Activated T-helper 1 cell treated with anti-CD3 and anti-CD28 coated beads, Interleukin-12 subunit alpha, Interleukin-12 subunit beta, Interleukin-2, Interleukin-4 antibody, amounts not matched to agents 30 ng/mL and 10 ng/mL and 1 ng/mL, durations not matched to agents 14 hours and 24 hours and 36 hours (primary cell): ENCODE measurements at regions of chr15 and their contacts with region 1.

Region 1: DNA sequence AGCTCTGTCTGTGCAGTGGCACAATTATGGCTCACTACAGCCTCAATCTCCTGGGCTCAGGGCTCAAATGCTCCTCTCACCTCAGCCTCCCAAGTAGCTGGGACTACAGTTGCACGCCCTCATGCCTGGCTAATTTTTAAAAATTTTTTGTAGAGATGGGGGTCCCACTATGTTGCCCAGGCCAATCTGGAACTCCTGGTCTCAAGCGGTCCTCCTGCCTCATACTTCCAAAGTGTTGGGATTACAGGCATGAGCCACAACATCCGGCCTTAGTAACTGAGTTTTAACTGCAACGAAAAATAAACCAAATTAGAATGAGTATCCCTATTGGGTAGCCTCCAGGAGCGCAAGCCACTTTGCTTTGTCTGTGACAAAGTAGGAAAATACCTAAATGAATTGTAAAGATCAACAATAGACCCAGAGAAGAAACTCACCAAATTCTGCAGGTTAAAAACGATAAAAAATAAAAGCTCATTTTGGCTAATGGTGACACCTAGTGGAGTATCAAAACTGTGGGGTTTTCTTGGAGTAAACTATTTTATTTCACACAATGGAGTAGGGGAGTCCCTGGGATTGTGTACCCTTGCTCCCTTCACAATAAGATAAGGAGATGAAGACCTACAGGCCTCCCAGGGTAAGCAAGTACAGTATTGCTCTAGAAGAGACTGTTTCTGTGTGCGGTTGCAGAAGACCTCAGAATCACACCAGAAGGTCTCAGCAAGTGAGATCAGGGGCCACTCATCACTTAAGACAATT is 21.0 kb upstream of the CA12 start:
- DNase-seq: no peak
- H3K4me3 Mint-ChIP-seq: no peak overlapping the region
- H3K27ac Mint-ChIP-seq: no peak overlapping the region
- H3K4me1 Mint-ChIP-seq: peaks cover 24% of the 10 kb centered on the region
- H3K27me3 Mint-ChIP-seq: no peaks in the 10 kb centered on the region

Region 2: GRCh38 chr15:63048115-63048775 is 354.4 kb before region 1 on chr15:
- intact Hi-C with region 1: loop called (anchors 2 kb)
- DNase-seq: peak; percentile 79
- H3K4me3 Mint-ChIP-seq: peak overlapping the region; percentile 92
- H3K27ac Mint-ChIP-seq: no peak overlapping the region
- H3K4me1 Mint-ChIP-seq: peaks cover 20% of the 10 kb centered on the region
- H3K27me3 Mint-ChIP-seq: peaks cover 55% of the 10 kb centered on the region

Region 3: DNA sequence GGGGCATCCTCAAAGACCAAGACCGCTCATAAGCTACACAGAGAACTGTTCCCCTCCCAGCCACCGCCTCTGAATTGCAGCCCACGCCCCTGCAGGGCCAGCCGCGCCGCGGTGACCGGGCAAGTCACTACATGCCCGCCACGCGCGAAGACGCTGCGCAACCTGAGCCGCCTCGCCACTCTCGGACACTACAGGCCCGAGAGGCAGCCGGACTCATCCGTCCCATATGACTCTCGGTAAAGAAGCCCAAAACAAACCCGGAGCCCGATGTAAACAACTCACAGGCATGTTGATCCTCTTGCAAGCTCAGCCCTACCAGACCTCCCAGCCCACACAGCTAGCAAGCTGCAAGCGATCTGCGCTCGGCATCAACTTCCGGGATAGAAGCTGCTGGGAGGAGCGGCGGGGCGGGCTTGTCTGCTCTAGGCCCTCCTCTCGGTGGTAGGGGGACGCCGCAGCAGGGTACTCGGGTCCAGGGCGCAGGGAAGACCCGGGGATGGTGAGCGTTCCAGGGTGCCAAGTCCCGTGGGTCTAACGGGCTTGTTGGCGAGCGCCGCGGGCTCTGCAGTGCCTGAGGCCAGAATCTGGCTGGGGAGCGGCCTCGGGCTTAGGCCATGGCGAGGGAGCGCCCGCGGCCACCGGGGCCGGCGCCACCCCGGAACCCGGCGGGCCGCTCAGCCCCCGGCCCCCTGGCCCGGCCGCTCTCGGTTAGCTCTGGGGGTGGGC is 245.4 kb before region 1 on chr15 and contains the start of gene RPS27L:
- intact Hi-C with region 1: loop called (anchors 10 kb)
- DNase-seq: peak; percentile 86
- H3K4me3 Mint-ChIP-seq: peak within 1 kb of the TSS; percentile 98
- H3K27ac Mint-ChIP-seq: peak within 1 kb of the TSS; percentile 98
- H3K4me1 Mint-ChIP-seq: peaks cover 21% of the 10 kb centered on the region
- H3K27me3 Mint-ChIP-seq: no peaks in the 10 kb centered on the region
- total RNA-seq, gene RPS27L: 163 and 164 TPM in 2 replicates

Region 4: GRCh38 chr15:63212050-63213004 is 190.3 kb before region 1 on chr15:
- intact Hi-C with region 1: no loop called
- DNase-seq: no peak
- H3K4me3 Mint-ChIP-seq: peak overlapping the region; percentile 79
- H3K27ac Mint-ChIP-seq: peak overlapping the region; percentile 98
- H3K4me1 Mint-ChIP-seq: peaks cover 68% of the 10 kb centered on the region
- H3K27me3 Mint-ChIP-seq: no peaks in the 10 kb centered on the region

Region 5: GRCh38 chr15:63288778-63289378 is 113.8 kb before region 1 on chr15:
- intact Hi-C with region 1: loop called (anchors 1 kb)
- DNase-seq: no peak
- H3K4me3 Mint-ChIP-seq: no peak overlapping the region
- H3K27ac Mint-ChIP-seq: no peak overlapping the region
- H3K4me1 Mint-ChIP-seq: peaks cover 8% of the 10 kb centered on the region
- H3K27me3 Mint-ChIP-seq: peaks cover 3% of the 10 kb centered on the region

Region 6: DNA sequence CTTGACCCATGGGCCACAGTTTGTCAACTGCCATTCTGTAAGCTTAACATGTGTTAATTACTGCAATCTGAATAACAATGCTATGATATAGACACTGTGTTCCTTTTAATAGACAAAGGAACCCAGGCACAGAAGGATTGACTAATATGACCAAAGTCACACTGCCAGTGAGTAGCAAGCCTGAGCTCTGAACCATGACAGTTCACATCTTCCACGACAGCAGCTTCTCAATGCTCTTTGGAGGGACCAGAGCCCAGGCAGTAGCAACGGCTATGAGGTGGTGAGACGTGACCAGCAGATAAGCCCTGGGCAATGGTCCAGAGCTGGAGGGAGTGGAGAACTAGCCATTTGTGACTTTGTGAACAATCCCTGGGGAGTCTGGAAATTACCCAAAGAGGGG is 40.5 kb before region 1 on chr15:
- intact Hi-C with region 1: loop called (anchors 5 kb)
- DNase-seq: no peak
- H3K4me3 Mint-ChIP-seq: no peak overlapping the region
- H3K27ac Mint-ChIP-seq: no peak overlapping the region
- H3K4me1 Mint-ChIP-seq: no peaks in the 10 kb centered on the region
- H3K27me3 Mint-ChIP-seq: peaks cover 17% of the 10 kb centered on the region

Region 7: GRCh38 chr15:63420333-63420747 is 17.7 kb after region 1 on chr15:
- intact Hi-C with region 1: no loop called
- DNase-seq: no peak
- H3K4me3 Mint-ChIP-seq: no peak overlapping the region
- H3K27ac Mint-ChIP-seq: no peak overlapping the region
- H3K4me1 Mint-ChIP-seq: no peaks in the 10 kb centered on the region
- H3K27me3 Mint-ChIP-seq: peaks cover 4% of the 10 kb centered on the region

Region 8: DNA sequence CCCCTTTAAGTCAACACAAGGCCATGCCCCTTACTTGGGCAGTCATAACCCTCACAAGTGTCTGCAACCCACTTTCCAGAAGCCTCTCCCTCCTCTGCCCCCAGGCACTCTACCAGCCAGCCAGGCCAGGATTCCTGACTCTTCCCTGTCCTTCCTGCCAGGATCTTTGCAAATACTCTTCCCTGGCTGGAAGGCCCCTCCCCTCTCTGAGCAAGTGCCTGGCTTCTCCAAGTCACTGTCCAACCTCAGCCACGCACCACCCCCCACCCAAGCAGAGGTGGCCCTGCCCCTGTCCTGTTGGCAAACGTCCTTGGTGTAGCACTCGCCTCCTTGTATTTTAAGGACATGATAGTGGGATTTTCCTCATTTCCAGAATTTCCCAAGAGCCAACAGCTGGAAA is 47.1 kb after region 1 on chr15:
- intact Hi-C with region 1: no loop called
- DNase-seq: no peak
- H3K4me3 Mint-ChIP-seq: no peak overlapping the region
- H3K27ac Mint-ChIP-seq: no peak overlapping the region
- H3K4me1 Mint-ChIP-seq: peaks cover 26% of the 10 kb centered on the region
- H3K27me3 Mint-ChIP-seq: peaks cover 4% of the 10 kb centered on the region